WTC11 (cell line): ENCODE measurements at regions of chr3 and their contacts with region 1.

Region 1: GRCh38 chr3:37996785-37997301 is 6.3 kb downstream of the VILL start:
- DNase-seq: peak; percentile 88
- ATAC-seq: peak; percentile 26
- H3K4me3 Mint-ChIP-seq: no peak overlapping the region
- H3K27ac Mint-ChIP-seq: no peak overlapping the region
- H3K4me1 Mint-ChIP-seq: peaks cover 26% of the 10 kb centered on the region
- H3K27me3 Mint-ChIP-seq: peaks cover 29% of the 10 kb centered on the region
- CTCF ChIP-seq: peak; percentile 97

Region 2: DNA sequence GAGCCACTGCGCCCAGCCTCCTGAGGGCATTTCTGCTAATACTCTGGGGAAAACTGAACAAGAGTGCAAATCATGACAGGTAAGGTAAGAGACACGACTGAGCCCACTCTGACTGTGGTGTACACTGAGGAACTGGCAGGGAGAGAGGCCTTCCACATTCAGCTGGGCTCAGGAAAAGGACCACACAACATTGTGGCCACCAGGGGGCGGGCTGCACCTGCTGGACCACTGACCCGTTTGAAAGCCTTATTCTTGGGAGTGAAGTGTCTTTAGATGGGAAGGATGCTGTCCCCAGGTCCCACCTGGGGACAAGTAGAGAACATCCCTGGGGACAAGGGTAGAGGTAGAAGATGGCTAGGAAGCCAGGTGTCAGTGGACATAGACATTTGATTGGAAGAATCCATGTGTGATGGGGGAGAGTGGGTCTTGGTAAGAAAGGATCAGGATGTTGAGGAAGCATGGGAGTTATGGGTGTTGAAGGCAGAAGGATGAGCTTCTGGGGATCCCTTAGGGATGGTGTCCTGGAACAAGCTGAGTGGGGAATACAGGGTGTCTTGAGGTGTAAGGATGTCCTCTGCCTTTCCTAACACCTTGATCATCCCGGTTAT is 141.4 kb before region 1 on chr3:
- CTCF ChIA-PET with region 1: interaction called, 39 read pairs
- POLR2A ChIA-PET with region 1: no interaction called
- DNase-seq: peak; percentile 89
- ATAC-seq: peak; percentile 41
- H3K4me3 Mint-ChIP-seq: no peak overlapping the region
- H3K27ac Mint-ChIP-seq: no peak overlapping the region
- H3K4me1 Mint-ChIP-seq: peaks cover 19% of the 10 kb centered on the region
- H3K27me3 Mint-ChIP-seq: peaks cover 19% of the 10 kb centered on the region
- CTCF ChIP-seq: peak; percentile 95

Region 3: DNA sequence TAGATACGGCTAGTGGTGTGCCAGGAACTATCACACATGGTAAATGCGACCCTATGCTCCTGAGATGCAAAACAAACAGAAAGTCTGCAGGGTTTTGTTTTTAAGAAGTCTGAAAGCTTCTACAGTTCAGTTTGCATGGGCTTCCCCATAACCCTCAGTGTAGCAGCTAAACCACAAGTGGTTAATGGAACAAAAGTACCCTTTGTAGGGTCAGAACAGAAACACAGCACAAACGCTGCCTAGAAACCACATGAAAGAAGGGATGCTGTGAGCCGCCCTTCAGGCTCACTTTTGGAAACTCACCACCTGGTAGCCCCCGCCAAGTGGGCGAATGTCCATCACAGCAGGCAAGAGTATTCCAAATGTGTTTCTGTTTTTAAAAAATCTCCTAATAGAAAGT is 88.9 kb before region 1 on chr3:
- CTCF ChIA-PET with region 1: no interaction called
- POLR2A ChIA-PET with region 1: no interaction called
- DNase-seq: no peak
- ATAC-seq: no peak
- H3K4me3 Mint-ChIP-seq: no peak overlapping the region
- H3K27ac Mint-ChIP-seq: no peak overlapping the region
- H3K4me1 Mint-ChIP-seq: peaks cover 33% of the 10 kb centered on the region
- H3K27me3 Mint-ChIP-seq: no peaks in the 10 kb centered on the region
- CTCF ChIP-seq: no peak

Region 4: DNA sequence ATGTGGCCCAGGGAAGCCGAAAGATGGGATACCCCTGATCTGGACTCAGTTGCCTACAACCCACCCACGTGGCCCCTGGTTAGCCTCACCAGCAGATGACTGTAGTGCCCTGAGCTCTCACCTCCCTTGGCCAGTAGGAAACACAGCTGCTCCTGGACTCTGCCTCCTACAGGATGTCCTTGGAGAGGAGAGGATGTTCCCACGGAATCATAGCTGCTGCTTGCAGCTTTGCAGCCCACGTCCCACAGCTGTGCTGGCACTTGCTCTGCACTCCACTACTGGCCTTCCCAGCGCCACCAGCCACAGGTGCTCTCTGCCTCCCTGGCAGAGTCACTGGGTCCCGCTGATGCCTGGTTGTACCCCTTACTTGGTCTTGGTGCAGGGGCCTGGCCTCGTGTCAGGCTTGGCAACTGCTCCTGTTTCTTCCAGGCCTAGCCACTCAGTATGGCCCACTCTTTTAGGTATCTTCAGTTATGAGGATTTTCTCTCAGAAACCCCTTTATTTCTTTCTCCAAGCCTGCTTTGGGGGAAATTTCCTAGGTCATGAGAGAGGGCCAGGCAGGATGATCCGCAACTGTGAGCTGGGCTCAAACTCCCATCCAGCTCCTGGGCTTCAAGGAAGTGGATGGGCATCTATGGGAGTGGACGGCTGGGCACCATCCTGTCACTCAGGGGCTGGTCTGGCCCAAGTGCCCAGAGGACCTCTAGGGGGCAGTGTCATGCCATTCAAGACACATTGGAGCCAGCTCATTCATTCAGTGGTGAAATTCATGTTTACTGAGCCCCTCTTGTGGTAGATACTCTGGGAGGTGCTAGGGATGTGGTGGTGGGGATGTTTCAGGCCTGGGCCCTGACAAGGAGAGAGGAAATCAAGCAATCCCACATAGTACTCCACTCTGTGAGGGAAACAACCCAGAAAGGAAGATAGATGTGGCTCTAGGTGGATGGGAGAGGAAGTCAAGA is 22.4 kb before region 1 on chr3:
- CTCF ChIA-PET with region 1: interaction called, 25 read pairs
- POLR2A ChIA-PET with region 1: interaction called, 3 read pairs
- DNase-seq: peak; percentile 77
- ATAC-seq: peak; percentile 95
- H3K4me3 Mint-ChIP-seq: no peak overlapping the region
- H3K27ac Mint-ChIP-seq: peak overlapping the region; percentile 3; the same call in 1 of the 2 replicates
- H3K4me1 Mint-ChIP-seq: peaks cover 13% of the 10 kb centered on the region
- H3K27me3 Mint-ChIP-seq: peaks cover 2% of the 10 kb centered on the region; the same call in 1 of the 2 replicates
- CTCF ChIP-seq: peak; percentile 78

Region 5: DNA sequence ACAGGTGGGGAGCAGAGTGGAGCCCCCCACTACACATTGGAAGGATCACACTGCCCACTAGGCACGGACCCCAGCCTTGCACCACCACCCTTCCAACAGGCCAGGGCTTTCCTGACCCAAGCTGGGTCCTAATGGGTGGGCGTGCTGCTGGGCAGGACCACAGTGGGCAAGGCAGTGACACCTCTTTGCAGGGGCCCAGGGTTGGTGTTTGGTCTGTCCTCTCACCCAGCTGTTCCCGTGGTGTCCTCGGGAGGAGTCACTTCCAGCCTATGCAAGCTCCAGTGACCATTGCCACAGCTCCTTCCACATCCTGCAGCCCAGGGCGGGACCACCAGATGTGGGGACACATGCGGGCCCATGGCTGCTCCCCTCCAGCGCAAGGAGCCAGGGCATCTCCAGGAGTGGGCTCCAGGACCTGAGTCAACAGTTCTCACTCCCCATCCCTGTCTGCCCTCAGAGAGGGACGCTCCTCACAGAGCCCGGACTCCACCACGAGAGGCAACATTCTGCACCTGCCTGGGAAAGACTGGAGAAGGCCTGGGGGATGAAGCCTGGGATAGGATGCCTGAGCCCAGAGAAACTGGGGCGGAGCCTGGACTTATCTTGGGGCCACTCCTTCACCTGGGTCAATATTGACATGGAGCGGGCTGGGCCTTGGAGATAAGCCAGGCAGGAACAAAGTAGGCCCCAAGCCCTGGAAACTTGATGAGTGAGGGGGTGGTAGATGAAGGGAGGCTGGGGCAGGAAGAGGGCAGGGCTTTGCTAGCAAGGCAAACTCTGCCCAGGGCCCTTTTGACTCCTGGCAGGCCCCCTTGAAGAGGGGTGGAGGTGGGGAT is 10.1 kb before region 1 on chr3:
- CTCF ChIA-PET with region 1: interaction called, 37 read pairs
- POLR2A ChIA-PET with region 1: interaction called, 3 read pairs
- DNase-seq: no peak
- ATAC-seq: peak; percentile 26
- H3K4me3 Mint-ChIP-seq: no peak overlapping the region
- H3K27ac Mint-ChIP-seq: no peak overlapping the region
- H3K4me1 Mint-ChIP-seq: peaks cover 13% of the 10 kb centered on the region
- H3K27me3 Mint-ChIP-seq: no peaks in the 10 kb centered on the region; the same call in 1 of the 2 replicates
- CTCF ChIP-seq: no peak

Region 6: GRCh38 chr3:38039101-38039898 is 42.5 kb after region 1 on chr3 and contains the start of gene DLEC1:
- CTCF ChIA-PET with region 1: interaction called, 11 read pairs
- POLR2A ChIA-PET with region 1: no interaction called
- DNase-seq: peak; percentile 81
- ATAC-seq: peak; percentile 76
- H3K4me3 Mint-ChIP-seq: peak within 1 kb of the TSS; percentile 66
- H3K27ac Mint-ChIP-seq: no peak within 1 kb of the TSS
- H3K4me1 Mint-ChIP-seq: peaks cover 18% of the 10 kb centered on the region
- H3K27me3 Mint-ChIP-seq: peaks cover 44% of the 10 kb centered on the region
- CTCF ChIP-seq: no peak
- total RNA-seq, gene DLEC1: 0.81 to 1.4 TPM (median 1.1 TPM) in 3 replicates

Region 7: GRCh38 chr3:38147421-38147820 is 150.6 kb after region 1 on chr3:
- CTCF ChIA-PET with region 1: no interaction called
- POLR2A ChIA-PET with region 1: no interaction called
- DNase-seq: no peak
- ATAC-seq: no peak
- H3K4me3 Mint-ChIP-seq: no peak overlapping the region
- H3K27ac Mint-ChIP-seq: no peak overlapping the region
- H3K4me1 Mint-ChIP-seq: no peaks in the 10 kb centered on the region
- H3K27me3 Mint-ChIP-seq: peaks cover 17% of the 10 kb centered on the region
- CTCF ChIP-seq: no peak

Region 8: GRCh38 chr3:38190481-38190881 is 193.6 kb after region 1 on chr3:
- CTCF ChIA-PET with region 1: no interaction called
- POLR2A ChIA-PET with region 1: no interaction called
- DNase-seq: no peak
- ATAC-seq: no peak
- H3K4me3 Mint-ChIP-seq: no peak overlapping the region
- H3K27ac Mint-ChIP-seq: no peak overlapping the region
- H3K4me1 Mint-ChIP-seq: no peaks in the 10 kb centered on the region
- H3K27me3 Mint-ChIP-seq: no peaks in the 10 kb centered on the region
- CTCF ChIP-seq: no peak